ENCODE measurements at regions of chr7 and their contacts with region 1.

Region 1: GRCh38 chr7:98168181-98168905 is 42.9 kb upstream of the BHLHA15 start:
- DNase-seq: no peak
- H3K4me3 ChIP-seq: no peak overlapping the region
- H3K27ac ChIP-seq: no peak overlapping the region
- H3K4me1 ChIP-seq: peaks cover 0 to 16% (median 14%) of the 10 kb centered on the region in 4 donors
- H3K27me3 ChIP-seq: no peaks in the 10 kb centered on the region
- CTCF ChIP-seq: peak; percentile 76 to 82 (median 77)
- EP300 ChIP-seq: no peak
- POLR2A ChIP-seq: no peak

Region 2: DNA sequence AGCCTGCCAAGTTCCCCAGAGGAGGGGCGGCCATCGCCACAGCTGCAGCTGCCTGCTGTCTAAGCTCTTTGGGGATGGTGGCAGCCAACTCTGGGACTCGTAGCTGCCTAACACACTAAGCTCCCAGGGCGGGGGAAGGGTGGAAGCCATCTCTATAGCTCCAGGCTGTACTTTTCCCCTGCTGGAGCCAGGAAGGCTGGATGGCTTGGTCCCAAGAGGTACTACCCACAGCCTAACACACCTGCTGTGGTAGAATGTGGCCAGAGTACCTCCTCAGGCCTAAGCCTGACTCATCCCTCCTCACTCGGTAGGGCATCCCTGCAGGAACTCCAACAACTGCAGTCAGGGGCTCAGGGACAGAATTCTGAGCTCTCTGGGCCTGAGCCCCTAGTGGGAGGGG is 588.1 kb before region 1 on chr7:
- intact Hi-C with region 1: no loop called
- DNase-seq: no peak
- H3K4me3 ChIP-seq: no peak overlapping the region
- H3K27ac ChIP-seq: no peak overlapping the region
- H3K4me1 ChIP-seq: no peaks in the 10 kb centered on the region
- H3K27me3 ChIP-seq: no peaks in the 10 kb centered on the region
- CTCF ChIP-seq: no peak
- EP300 ChIP-seq: no peak
- POLR2A ChIP-seq: no peak

Region 3: DNA sequence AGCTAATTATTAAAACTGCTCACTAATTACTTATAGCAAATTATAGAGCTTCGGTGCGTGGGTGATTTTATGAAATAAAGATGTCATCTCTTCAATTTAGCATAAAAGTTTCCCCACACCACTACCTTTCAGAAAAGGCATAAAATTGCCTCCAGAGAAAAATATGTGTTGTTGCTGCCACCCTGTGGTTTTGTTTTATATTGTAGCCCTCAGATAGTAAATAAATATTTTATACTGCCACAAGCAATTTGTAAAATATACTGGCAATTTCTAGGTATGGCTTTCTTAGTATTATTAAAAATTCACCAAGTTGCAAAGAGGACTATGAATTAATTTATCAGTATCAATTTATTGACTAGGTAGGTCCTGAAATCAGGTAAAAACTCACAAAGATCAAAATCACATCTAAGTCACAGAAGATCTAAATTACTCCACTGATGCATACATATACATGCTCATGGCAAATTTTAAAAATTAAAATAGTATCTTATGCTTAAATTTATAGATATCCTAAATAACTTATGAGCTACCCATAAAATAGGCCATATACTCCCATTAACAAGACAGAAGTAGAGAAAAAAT is 322.6 kb before region 1 on chr7:
- intact Hi-C with region 1: no loop called
- DNase-seq: no peak
- H3K4me3 ChIP-seq: no peak overlapping the region
- H3K27ac ChIP-seq: no peak overlapping the region
- H3K4me1 ChIP-seq: no peaks in the 10 kb centered on the region
- H3K27me3 ChIP-seq: peaks cover 0 to 8% (median 0%) of the 10 kb centered on the region in 4 donors
- CTCF ChIP-seq: peak in 2 of 3 experiments; percentile 12 to 32
- EP300 ChIP-seq: no peak
- POLR2A ChIP-seq: no peak

Region 4: DNA sequence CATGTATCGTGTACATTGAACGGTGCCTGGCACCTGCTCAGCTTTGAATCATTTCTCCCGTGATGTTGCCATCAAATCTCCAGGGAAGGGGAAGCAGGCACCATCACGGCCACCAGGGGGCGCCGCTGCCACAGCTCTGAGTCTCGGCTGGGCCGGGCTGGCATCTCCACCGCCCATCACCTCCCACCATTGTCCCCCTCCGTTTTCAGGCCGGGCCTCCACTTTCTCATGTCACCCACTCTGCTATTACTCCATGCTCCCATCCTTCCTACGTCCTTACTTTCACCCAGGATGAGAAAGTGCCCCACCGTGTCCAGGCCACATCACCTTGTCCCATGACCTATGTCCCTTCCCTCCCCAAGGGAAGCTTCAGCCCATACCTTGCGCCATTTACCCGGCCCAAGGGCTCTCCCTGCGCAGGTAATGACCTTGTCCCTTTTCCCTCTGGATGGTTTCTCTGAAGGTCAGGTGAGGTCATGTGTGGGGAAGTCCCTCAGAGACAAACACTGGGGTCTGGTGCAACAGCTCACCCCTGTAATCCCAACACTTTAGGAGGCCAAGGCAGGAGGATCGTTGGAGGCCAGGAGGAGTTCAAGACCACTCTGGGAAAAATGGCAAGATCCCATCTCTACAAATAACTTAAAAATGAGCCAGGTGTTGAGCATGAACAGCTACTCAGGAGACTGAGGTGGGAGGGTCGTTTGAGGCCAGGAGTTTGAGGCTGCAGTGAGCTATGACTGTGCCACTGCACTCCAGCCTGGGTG is 146.6 kb before region 1 on chr7:
- intact Hi-C with region 1: loop called (anchors 2 kb)
- DNase-seq: peak; percentile 94
- H3K4me3 ChIP-seq: no peak overlapping the region
- H3K27ac ChIP-seq: no peak overlapping the region
- H3K4me1 ChIP-seq: no peaks in the 10 kb centered on the region
- H3K27me3 ChIP-seq: peaks cover 0 to 9% (median 0%) of the 10 kb centered on the region in 4 donors
- CTCF ChIP-seq: peak; percentile 64 to 89 (median 86)
- EP300 ChIP-seq: no peak
- POLR2A ChIP-seq: no peak

Region 5: DNA sequence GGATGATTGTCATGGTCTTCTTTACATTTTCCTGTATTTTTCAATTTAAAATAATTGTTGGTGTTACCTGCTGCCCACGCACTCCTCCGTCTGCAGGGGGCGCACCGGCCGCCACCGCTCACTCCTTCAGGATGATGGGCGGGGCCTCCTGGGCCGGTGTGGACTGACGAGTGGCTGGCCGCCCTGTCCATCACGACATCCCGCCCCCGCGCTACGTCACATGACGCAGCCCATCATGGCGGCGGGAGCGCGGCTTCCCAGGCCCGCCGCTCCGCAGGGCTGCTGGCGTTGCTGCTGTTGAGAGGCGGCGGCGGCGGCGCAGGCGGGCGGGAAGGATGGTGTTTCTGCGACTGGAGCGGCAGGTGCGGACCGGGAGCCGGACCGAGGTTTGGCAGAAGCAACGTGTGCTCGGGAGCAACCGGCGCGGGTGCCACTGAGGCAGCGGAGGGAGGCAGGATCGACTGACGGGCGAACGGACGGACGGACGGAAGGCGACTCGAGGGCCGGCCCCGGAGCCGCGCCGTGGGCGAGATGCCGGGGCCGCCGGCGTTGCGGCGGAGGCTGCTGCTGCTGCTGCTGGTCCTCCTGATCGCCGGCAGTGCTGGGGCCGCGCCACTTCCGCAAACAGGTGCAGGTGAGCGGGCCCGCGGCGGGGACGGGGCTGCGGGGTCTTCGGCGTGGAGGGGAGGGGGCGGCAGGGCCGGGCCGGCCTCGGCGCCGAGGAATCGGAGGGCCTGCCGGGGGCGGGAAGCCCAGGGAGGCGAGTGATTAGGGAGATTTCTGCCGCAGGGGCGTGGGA is 61.5 kb before region 1 on chr7 and contains the start of gene LMTK2:
- intact Hi-C with region 1: loop called (anchors 1 kb)
- DNase-seq: peak; percentile 99
- H3K4me3 ChIP-seq: peak within 1 kb of the TSS; percentile 76 to 99 (median 89)
- H3K27ac ChIP-seq: peak within 1 kb of the TSS; percentile 78 to 92 (median 84)
- H3K4me1 ChIP-seq: peaks cover 24 to 41% (median 31%) of the 10 kb centered on the region in 4 donors
- H3K27me3 ChIP-seq: no peaks in the 10 kb centered on the region
- CTCF ChIP-seq: peak; percentile 92 to 98 (median 96)
- EP300 ChIP-seq: no peak
- POLR2A ChIP-seq: peak; percentile 77
- total RNA-seq, gene LMTK2: 22.5 to 31.7 (median 28.4) TPM

Region 6: GRCh38 chr7:98223898-98224840 is 55.8 kb after region 1 on chr7:
- intact Hi-C with region 1: no loop called
- DNase-seq: no peak
- H3K4me3 ChIP-seq: no peak overlapping the region
- H3K27ac ChIP-seq: no peak overlapping the region
- H3K4me1 ChIP-seq: no peaks in the 10 kb centered on the region
- H3K27me3 ChIP-seq: no peaks in the 10 kb centered on the region
- CTCF ChIP-seq: no peak
- EP300 ChIP-seq: no peak
- POLR2A ChIP-seq: no peak

Measured in esophagus muscularis mucosa (tissue), 4 donors.